Activated CD4-positive, alpha-beta T cell treated with anti-CD3 and anti-CD28 coated beads, Interleukin-2, amount 10 ng/mL, durations not matched to agents 7 days and 5 days (primary cell): ENCODE measurements at regions of chr3 and their contacts with region 1.

Region 1: DNA sequence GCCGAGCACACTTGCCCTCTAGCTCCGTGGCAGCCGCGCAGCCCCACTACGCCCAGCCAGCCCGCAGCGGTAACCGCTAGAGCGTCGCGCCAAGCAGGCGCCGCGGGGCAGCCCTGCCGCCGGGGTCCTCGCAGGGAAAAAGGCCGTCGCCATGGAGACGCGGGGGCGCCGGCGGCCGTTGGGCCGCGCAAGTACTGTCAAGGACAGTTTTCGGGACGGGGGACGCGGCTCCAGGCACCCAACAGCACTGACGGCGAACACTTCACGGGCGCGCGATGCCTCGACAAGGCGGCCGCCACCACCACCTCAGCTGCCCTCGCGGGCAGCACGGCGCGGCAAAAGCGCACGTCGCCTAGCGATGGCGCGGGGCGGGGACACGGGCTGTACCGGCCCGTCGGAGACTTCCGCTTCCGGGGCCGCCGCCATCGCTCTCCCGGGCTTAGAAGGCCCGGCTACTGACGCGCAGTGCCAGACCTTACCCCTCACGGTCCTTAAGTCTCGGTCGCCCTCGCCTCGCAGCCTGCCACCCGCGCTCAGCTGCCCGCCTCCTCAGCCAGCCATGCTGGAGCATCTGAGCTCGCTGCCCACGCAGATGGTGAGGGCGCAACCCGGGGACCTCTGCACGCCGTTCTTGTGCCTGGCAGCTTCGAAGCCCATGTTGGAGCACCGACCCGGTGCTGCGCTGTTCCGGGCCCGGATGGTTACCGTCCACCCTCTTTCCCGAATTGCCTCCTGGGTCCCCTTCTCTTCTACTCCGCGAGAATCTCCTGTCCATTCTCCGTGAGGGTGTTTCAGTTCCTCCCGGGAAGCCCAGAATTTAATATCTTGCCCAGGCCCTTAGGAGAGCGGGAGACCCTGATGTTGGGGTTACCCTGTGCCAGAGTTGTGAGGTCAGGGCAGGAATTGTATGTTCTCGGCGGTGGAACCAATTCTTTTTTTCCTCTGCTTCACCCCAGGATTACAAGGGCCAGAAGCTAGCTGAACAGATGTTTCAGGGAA is at the starts of genes GLT8D1 and SPCS1:
- DNase-seq: peak; percentile 88
- H3K4me3 Mint-ChIP-seq: peak within 1 kb of the TSS; percentile 96
- H3K27ac Mint-ChIP-seq: peak within 1 kb of the TSS; percentile 93
- H3K4me1 Mint-ChIP-seq: peaks cover 41% of the 10 kb centered on the region
- H3K27me3 Mint-ChIP-seq: no peaks in the 10 kb centered on the region
- total RNA-seq, gene GLT8D1: 43.0 to 47.2 TPM
- total RNA-seq, gene SPCS1: 97.0 to 102 TPM

Region 2: GRCh38 chr3:52693071-52693470 is 12.9 kb before region 1 on chr3:
- CTCF ChIA-PET with region 1: interaction called, 11 read pairs
- POLR2A ChIA-PET with region 1: no interaction called
- DNase-seq: no peak
- H3K4me3 Mint-ChIP-seq: no peak overlapping the region
- H3K27ac Mint-ChIP-seq: no peak overlapping the region
- H3K4me1 Mint-ChIP-seq: peaks cover 29% of the 10 kb centered on the region
- H3K27me3 Mint-ChIP-seq: no peaks in the 10 kb centered on the region